ENCODE measurements at regions of chr10 and their contacts with region 1.

Region 1: GRCh38 chr10:89404104-89405047 is 10.0 kb upstream of the IFIT5 start:
- DNase-seq: no peak
- ATAC-seq: no peak
- H3K4me3 ChIP-seq: no peak overlapping the region
- H3K27ac ChIP-seq: no peak overlapping the region
- H3K4me1 ChIP-seq: no peaks in the 10 kb centered on the region
- H3K27me3 ChIP-seq: no peaks in the 10 kb centered on the region
- CTCF ChIP-seq: no peak
- EP300 ChIP-seq: no peak
- POLR2A ChIP-seq: 0 out of 2 replicates have a peak, but pooled peaks have one; percentile 22
- RAD21 ChIP-seq: no peak

Region 2: DNA sequence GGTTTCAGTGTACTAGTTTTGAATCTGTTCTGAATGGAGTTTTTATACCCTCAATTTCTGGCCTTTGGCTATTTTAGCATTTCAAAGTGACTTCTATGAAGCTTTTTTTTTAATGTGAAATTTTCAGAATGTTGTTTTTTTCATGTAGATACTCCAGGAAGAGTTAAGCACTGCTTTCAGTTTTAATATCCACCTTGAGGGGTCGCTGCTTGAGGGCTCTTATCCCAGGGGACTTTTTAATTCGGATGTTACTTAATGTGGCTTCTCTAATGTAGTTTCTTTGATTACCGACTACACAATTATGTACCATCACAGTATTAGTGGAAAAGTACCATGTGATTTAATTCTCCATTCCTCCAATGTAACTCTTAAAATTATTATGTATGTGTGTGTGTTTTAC is 15.2 kb after region 1 on chr10:
- CTCF ChIA-PET with region 1: interaction called, 12 read pairs
- POLR2A ChIA-PET with region 1: interaction called, 4 read pairs
- RAD21 ChIA-PET with region 1: interaction called, 4 read pairs
- SMC1A ChIA-PET with region 1: interaction called, 13 read pairs
- in situ Hi-C with region 1: no loop called
- intact Hi-C with region 1: no loop called
- DNase-seq: no peak
- ATAC-seq: no peak
- H3K4me3 ChIP-seq: peak overlapping the region; percentile 61
- H3K27ac ChIP-seq: no peak overlapping the region
- H3K4me1 ChIP-seq: no peaks in the 10 kb centered on the region
- H3K27me3 ChIP-seq: no peaks in the 10 kb centered on the region
- CTCF ChIP-seq: peak; percentile 47 to 57 (median 49)
- EP300 ChIP-seq: no peak
- POLR2A ChIP-seq: no peak
- RAD21 ChIP-seq: peak; percentile 27; the same call in 1 of the 2 replicates

Measured in GM12878 (cell line).